ENCODE measurements at regions of chr21 and their contacts with region 1.

Region 1: DNA sequence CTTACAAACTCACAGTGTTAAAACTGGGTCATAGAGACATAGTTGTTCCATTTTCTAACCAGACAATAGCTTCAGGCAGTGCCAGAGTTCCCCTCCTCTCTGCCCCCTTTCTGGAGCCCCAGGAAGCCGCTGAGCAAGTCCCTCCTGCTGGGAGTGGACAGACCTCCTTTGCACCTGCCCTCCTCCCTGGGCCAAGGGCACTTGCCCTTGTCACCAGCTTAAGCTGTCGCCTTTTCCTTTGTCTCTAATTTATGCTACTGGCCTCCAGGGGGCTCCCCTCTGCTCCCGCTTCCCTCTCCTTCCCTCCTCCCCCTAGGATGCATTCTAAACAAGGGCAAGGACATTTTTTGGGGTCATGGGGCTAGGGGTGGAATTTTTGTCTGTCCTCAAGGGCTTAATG is 182.4 kb downstream of the MIS18A start:
- H3K4me3 ChIP-seq: no peak overlapping the region
- H3K27ac ChIP-seq: no peak overlapping the region
- H3K4me1 ChIP-seq: no peaks in the 10 kb centered on the region
- CTCF ChIP-seq: no peak; the same call in 1 of the 2 replicates

Region 2: GRCh38 chr21:32083197-32083596 is 13.2 kb before region 1 on chr21:
- CTCF ChIA-PET with region 1: interaction called, 19 read pairs
- POLR2A ChIA-PET with region 1: no interaction called
- H3K4me3 ChIP-seq: no peak overlapping the region
- H3K27ac ChIP-seq: no peak overlapping the region
- H3K4me1 ChIP-seq: peaks cover 11% of the 10 kb centered on the region
- CTCF ChIP-seq: no peak

Region 3: DNA sequence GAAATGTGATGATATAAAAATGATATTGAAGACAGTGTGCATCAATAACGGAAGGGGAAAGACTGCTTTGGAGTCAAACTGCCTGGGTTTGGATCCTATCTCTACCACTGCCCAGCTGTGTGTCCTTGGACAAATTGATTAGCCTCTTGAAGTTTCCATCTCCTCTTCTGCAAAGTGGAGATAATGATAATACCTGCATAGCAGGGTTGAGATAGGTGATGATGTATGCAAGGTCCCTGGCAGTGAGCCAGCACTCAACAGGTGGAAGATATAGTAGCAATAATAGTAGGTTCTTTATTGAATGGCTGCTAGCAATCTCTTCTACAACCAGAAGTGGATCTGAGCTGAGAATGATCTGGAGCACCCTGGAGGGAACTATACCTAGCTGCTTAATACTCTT is 15.8 kb after region 1 on chr21:
- CTCF ChIA-PET with region 1: interaction called, 16 read pairs
- POLR2A ChIA-PET with region 1: no interaction called
- H3K4me3 ChIP-seq: no peak overlapping the region
- H3K27ac ChIP-seq: no peak overlapping the region
- H3K4me1 ChIP-seq: no peaks in the 10 kb centered on the region
- CTCF ChIP-seq: no peak

Region 4: GRCh38 chr21:32507342-32507919 is 411.0 kb after region 1 on chr21:
- CTCF ChIA-PET with region 1: no interaction called
- POLR2A ChIA-PET with region 1: no interaction called
- H3K4me3 ChIP-seq: no peak overlapping the region
- H3K27ac ChIP-seq: no peak overlapping the region
- H3K4me1 ChIP-seq: no peaks in the 10 kb centered on the region
- CTCF ChIP-seq: no peak

Measured in HEK293 (cell line).